Endothelial cell of umbilical vein (primary cell): ENCODE measurements at regions of chr11 and their contacts with region 1.

Region 1: DNA sequence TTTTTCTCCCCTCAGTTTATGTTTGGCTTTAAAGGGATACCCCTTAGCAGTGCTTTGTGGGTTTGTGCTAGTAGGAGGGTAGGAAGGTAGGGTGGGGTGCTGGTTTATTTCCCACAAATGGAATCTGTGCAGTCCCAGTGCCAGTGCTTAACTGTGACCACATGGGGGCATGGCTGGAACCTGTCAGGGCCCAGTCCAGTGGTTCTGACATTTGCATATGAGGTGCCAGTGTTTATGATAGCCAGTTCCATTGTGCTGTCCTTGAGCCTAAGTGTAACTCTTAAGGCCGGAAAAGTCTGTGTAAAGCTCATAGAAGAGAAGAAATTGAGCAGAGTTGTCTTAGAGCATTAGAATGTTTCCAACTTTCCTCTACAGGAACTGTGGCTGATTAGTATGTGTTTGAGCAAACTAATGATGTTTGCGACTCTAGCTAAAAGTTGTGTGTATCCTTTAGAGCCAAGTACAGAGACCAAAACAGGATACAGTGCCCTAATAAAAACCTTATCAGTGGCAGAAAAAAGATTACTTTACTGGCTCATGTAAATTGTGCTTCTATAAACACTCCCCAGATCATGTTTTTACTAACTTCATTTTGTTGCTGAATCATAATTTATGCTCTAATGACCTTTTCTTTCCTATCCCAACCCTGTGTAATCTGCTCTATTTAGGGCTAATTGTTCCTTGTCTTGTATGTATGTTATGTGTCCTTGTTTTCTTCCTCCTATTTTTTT is 38.1 kb downstream of the DIXDC1 start:
- DNase-seq: peak; percentile 88
- H3K4me3 ChIP-seq: no peak overlapping the region
- H3K27ac ChIP-seq: peak overlapping the region; percentile 29
- H3K4me1 ChIP-seq: peaks cover 45% of the 10 kb centered on the region
- H3K27me3 ChIP-seq: no peaks in the 10 kb centered on the region
- CTCF ChIP-seq: peak; percentile 35 to 41
- POLR2A ChIP-seq: peak; percentile 54

Region 2: DNA sequence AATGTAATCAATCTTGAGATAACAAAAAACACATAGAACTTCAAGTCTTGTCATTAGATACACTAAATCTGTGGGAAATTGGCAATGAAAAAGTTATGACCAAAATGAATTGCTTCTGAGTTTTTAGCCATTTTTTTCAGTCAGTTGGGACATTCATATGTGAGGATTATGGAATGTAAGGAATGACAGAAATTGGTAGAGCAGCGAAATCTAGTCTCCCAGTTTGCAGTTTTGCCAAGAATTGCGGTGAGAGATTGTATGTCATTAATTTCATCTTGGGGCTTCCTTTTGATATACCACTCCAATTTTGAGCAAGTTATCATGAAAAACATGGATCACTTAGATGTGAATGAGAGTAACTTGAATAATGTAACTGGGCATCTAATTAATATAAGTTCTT is 323.1 kb before region 1 on chr11:
- CTCF ChIA-PET with region 1: no interaction called
- POLR2A ChIA-PET with region 1: no interaction called
- dilution Hi-C with region 1: no loop called
- intact Hi-C with region 1: no loop called
- DNase-seq: no peak
- H3K4me3 ChIP-seq: no peak overlapping the region
- H3K27ac ChIP-seq: no peak overlapping the region
- H3K4me1 ChIP-seq: no peaks in the 10 kb centered on the region
- H3K27me3 ChIP-seq: no peaks in the 10 kb centered on the region
- CTCF ChIP-seq: no peak
- POLR2A ChIP-seq: no peak

Region 3: GRCh38 chr11:111944651-111945051 is 30.6 kb before region 1 on chr11:
- CTCF ChIA-PET with region 1: interaction called, 19 read pairs
- POLR2A ChIA-PET with region 1: no interaction called
- dilution Hi-C with region 1: no loop called
- intact Hi-C with region 1: loop called (anchors 1 kb)
- DNase-seq: peak; percentile 96
- H3K4me3 ChIP-seq: no peak overlapping the region
- H3K27ac ChIP-seq: peak overlapping the region; percentile 89
- H3K4me1 ChIP-seq: peaks cover 48% of the 10 kb centered on the region
- H3K27me3 ChIP-seq: no peaks in the 10 kb centered on the region
- CTCF ChIP-seq: no peak
- POLR2A ChIP-seq: no peak

Region 4: DNA sequence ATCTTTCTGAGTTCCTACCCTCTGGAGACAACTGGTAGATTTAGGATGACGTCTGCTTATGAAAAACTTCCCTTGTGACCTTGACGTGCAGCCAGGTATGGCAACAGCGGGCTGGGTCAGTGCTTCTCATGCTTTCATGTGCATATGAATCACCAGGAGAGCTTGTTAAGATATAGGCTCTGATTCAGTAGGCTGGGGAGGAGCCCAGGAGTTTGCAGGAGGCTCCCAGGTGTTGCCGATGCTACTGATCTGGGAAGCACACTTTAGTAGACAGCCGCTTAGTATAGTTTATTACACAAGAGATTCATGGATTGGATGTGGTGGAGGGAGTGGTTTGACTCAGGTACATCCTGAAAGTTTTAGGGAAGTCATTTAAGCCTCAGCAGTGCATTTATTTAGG is 14.3 kb before region 1 on chr11:
- CTCF ChIA-PET with region 1: interaction called, 12 read pairs
- POLR2A ChIA-PET with region 1: interaction called, 5 read pairs
- dilution Hi-C with region 1: no loop called
- intact Hi-C with region 1: loop called (anchors 2 kb)
- DNase-seq: no peak
- H3K4me3 ChIP-seq: no peak overlapping the region
- H3K27ac ChIP-seq: no peak overlapping the region
- H3K4me1 ChIP-seq: peaks cover 12% of the 10 kb centered on the region
- H3K27me3 ChIP-seq: no peaks in the 10 kb centered on the region
- CTCF ChIP-seq: no peak
- POLR2A ChIP-seq: no peak

Region 5: DNA sequence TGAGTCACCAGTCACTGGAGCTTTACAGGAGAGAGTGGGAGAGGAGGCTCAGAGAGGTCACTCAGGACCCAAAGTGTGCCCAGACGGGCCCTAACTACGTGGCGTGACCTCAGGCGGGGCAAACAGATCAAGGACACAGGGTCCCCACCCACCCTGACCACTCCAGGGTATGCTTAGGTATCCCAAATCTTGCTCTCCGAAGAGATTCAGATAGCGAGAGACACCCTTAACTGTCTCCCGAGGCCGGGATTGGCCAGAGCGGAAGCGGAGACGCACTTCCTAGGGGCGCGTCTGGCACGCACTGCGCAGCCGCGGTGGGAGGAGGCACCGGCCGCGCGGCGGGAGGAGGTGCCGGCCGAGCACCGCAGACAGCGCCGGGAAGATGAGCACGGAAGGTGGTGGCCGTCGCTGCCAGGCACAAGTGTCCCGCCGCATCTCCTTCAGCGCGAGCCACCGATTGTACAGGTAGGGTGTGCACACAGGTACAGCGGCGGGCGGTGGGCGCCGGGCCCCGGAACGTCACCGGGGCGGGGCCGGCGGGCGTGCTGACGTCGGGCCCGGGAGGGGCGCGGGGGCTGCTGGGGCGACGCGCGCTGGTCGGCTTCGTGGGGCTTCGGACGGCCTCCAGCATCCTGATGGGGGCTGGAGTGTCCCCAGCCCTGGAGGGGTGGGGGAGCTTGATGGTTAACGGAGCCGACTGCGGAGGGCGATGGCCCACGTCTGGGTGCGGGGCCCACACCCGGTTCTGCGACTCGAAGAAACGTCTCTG is 251.0 kb after region 1 on chr11 and contains the start of gene PTS:
- CTCF ChIA-PET with region 1: no interaction called
- POLR2A ChIA-PET with region 1: no interaction called
- dilution Hi-C with region 1: no loop called
- intact Hi-C with region 1: no loop called
- DNase-seq: peak; percentile 87
- H3K4me3 ChIP-seq: peak within 1 kb of the TSS; percentile 30 to 77 (median 73)
- H3K27ac ChIP-seq: peak within 1 kb of the TSS; percentile 96
- H3K4me1 ChIP-seq: peaks cover 14% of the 10 kb centered on the region
- H3K27me3 ChIP-seq: no peaks in the 10 kb centered on the region
- CTCF ChIP-seq: no peak
- POLR2A ChIP-seq: peak; percentile 96
- total RNA-seq, gene PTS: 41.9 and 45.7 TPM in 2 replicates